IMR-90 (cell line): ENCODE measurements at regions of chr16 and their contacts with region 1.

Region 1: GRCh38 chr16:11297492-11298142 is 16.5 kb upstream of the PRM1 start:
- DNase-seq: peak; percentile 70
- ATAC-seq: peak; percentile 93
- H3K4me3 ChIP-seq: no peak overlapping the region
- H3K27ac ChIP-seq: no peak overlapping the region; the same call in 1 of the 2 replicates
- H3K4me1 ChIP-seq: peaks cover 10% of the 10 kb centered on the region
- H3K27me3 ChIP-seq: no peaks in the 10 kb centered on the region
- CTCF ChIP-seq: no peak
- POLR2A ChIP-seq: no peak
- RAD21 ChIP-seq: no peak

Region 2: GRCh38 chr16:11128265-11129141 is 169.1 kb before region 1 on chr16:
- CTCF ChIA-PET with region 1: no interaction called
- POLR2A ChIA-PET with region 1: no interaction called
- dilution Hi-C with region 1: no loop called
- in situ Hi-C with region 1: no loop called
- intact Hi-C with region 1: no loop called
- DNase-seq: peak; percentile 79
- ATAC-seq: peak; percentile 38
- H3K4me3 ChIP-seq: no peak overlapping the region
- H3K27ac ChIP-seq: peak overlapping the region; percentile 93
- H3K4me1 ChIP-seq: peaks cover 23% of the 10 kb centered on the region
- H3K27me3 ChIP-seq: no peaks in the 10 kb centered on the region
- CTCF ChIP-seq: no peak
- POLR2A ChIP-seq: no peak
- RAD21 ChIP-seq: no peak

Region 3: GRCh38 chr16:11356573-11357331 is 59.1 kb after region 1 on chr16:
- CTCF ChIA-PET with region 1: no interaction called
- POLR2A ChIA-PET with region 1: no interaction called
- dilution Hi-C with region 1: no loop called
- in situ Hi-C with region 1: no loop called
- intact Hi-C with region 1: loop called (anchors 5 kb)
- DNase-seq: peak; percentile 61
- ATAC-seq: peak; percentile 67
- H3K4me3 ChIP-seq: no peak overlapping the region
- H3K27ac ChIP-seq: peak overlapping the region; percentile 44; the same call in 1 of the 2 replicates
- H3K4me1 ChIP-seq: peaks cover 45% of the 10 kb centered on the region
- H3K27me3 ChIP-seq: no peaks in the 10 kb centered on the region
- CTCF ChIP-seq: peak; percentile 77
- POLR2A ChIP-seq: no peak
- RAD21 ChIP-seq: peak; percentile 80